ENCODE measurements at regions of chr13 and their contacts with region 1.

Region 1: GRCh38 chr13:104106705-104107393 is 1040.6 kb upstream of the SLC10A2 start:
- DNase-seq: no peak
- ATAC-seq: no peak
- H3K4me3 ChIP-seq: no peak overlapping the region
- H3K27ac ChIP-seq: no peak overlapping the region
- H3K4me1 ChIP-seq: no peaks in the 10 kb centered on the region
- H3K27me3 ChIP-seq: no peaks in the 10 kb centered on the region
- CTCF ChIP-seq: no peak
- POLR2A ChIP-seq: no peak

Region 2: DNA sequence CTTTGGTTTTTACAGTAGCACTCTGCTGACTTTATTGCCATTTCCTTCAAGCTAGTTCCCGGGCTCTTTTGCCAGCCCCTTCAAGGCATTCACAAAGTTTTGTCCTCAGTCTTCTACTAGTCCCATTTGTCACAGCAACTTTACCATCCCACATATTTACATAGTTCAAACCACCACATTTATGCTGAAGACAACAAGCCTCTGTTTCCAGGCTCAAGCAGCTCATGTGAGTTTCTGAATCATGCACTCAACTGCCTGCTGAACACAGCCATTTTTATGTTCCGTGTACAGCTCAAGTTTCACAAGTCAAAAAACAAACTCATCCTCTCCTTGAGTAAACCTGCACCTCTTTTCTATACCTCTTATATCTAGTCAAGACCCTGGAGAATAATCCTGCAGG is 63.7 kb before region 1 on chr13:
- intact Hi-C with region 1: no loop called
- DNase-seq: no peak
- ATAC-seq: no peak
- H3K4me3 ChIP-seq: no peak overlapping the region
- H3K27ac ChIP-seq: no peak overlapping the region
- H3K4me1 ChIP-seq: no peaks in the 10 kb centered on the region
- H3K27me3 ChIP-seq: no peaks in the 10 kb centered on the region
- CTCF ChIP-seq: no peak
- POLR2A ChIP-seq: no peak

Region 3: GRCh38 chr13:104086210-104086609 is 20.6 kb before region 1 on chr13:
- intact Hi-C with region 1: loop called in 1 of 10 experiments (anchors 2 kb)
- DNase-seq: no peak
- ATAC-seq: no peak
- H3K4me3 ChIP-seq: no peak overlapping the region
- H3K27ac ChIP-seq: no peak overlapping the region
- H3K4me1 ChIP-seq: no peaks in the 10 kb centered on the region
- H3K27me3 ChIP-seq: no peaks in the 10 kb centered on the region
- CTCF ChIP-seq: no peak
- POLR2A ChIP-seq: no peak

Region 4: GRCh38 chr13:104641335-104641734 is 534.5 kb after region 1 on chr13:
- intact Hi-C with region 1: no loop called
- DNase-seq: no peak
- ATAC-seq: no peak
- H3K4me3 ChIP-seq: no peak overlapping the region
- H3K27ac ChIP-seq: no peak overlapping the region
- H3K4me1 ChIP-seq: no peaks in the 10 kb centered on the region
- H3K27me3 ChIP-seq: no peaks in the 10 kb centered on the region
- CTCF ChIP-seq: no peak
- POLR2A ChIP-seq: no peak